ENCODE measurements at regions of chrX and their contacts with region 1.

Region 1: GRCh38 chrX:9995855-9996339 is 28.7 kb downstream of the CLDN34 start:
- DNase-seq: peak; percentile 83 to 91
- ATAC-seq: peak; percentile 94 to 99 (median 96)
- H3K4me3 ChIP-seq: no peak overlapping the region
- H3K27ac ChIP-seq: no peak overlapping the region
- H3K4me1 ChIP-seq: no peaks in the 10 kb centered on the region
- H3K27me3 ChIP-seq: no peaks in the 10 kb centered on the region
- CTCF ChIP-seq: peak; percentile 96

Region 2: GRCh38 chrX:9885150-9885549 is 110.7 kb before region 1 on chrX:
- intact Hi-C with region 1: loop called in 1 of 2 experiments (anchors 5 kb)
- DNase-seq: peak; percentile 34 to 64
- ATAC-seq: peak in 3 of 4 donors; percentile 54 to 72 (median 55)
- H3K4me3 ChIP-seq: no peak overlapping the region
- H3K27ac ChIP-seq: no peak overlapping the region
- H3K4me1 ChIP-seq: no peaks in the 10 kb centered on the region
- H3K27me3 ChIP-seq: peaks cover 0 to 14% (median 0%) of the 10 kb centered on the region in 3 donors
- CTCF ChIP-seq: peak; percentile 43

Measured in psoas muscle (tissue), 8 donors.